H1 (cell line): ENCODE measurements at regions of chr6 and their contacts with region 1.

Region 1: GRCh38 chr6:93036835-93037234 is 382.5 kb downstream of the EPHA7 start:
- DNase-seq: no peak
- H3K4me3 ChIP-seq: no peak overlapping the region
- H3K27ac ChIP-seq: no peak overlapping the region
- H3K4me1 ChIP-seq: no peaks in the 10 kb centered on the region; a peak in 1 of 7 replicates
- H3K27me3 ChIP-seq: no peaks in the 10 kb centered on the region
- CTCF ChIP-seq: peak in 2 of 3 experiments; percentile 41 to 62; a peak in 2 of 4 replicates
- EP300 ChIP-seq: no peak
- POLR2A ChIP-seq: no peak
- RAD21 ChIP-seq: peak; percentile 84 to 87

Region 2: DNA sequence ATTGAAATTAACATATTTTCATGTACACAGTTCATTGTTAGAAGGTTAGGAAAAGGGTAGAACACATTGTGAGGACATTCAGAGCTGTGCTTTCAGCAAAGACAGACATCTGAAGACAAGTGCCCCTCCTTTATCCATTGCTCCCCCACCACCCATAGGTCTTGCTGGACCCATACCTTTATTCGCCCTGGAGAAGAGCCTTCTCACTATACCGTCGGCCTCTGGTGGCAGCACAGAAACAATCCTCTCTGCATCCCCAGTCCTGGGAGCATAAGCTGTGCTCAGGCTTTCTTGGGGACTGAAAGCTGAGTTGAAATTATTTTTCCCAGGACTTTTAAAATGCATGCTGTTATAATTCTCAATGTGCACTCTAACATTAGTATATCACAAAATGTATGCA is 10.2 kb after region 1 on chr6:
- CTCF ChIA-PET with region 1: interaction called, 16 read pairs
- POLR2A ChIA-PET with region 1: no interaction called
- DNase-seq: no peak
- H3K4me3 ChIP-seq: no peak overlapping the region
- H3K27ac ChIP-seq: no peak overlapping the region
- H3K4me1 ChIP-seq: peaks cover 0 to 10% (median 2%) of the 10 kb centered on the region in 4 experiments; a peak in 2 of 7 replicates
- H3K27me3 ChIP-seq: no peaks in the 10 kb centered on the region
- CTCF ChIP-seq: peak in 2 of 3 experiments; percentile 32 to 41; a peak in 2 of 4 replicates
- EP300 ChIP-seq: no peak
- POLR2A ChIP-seq: no peak
- RAD21 ChIP-seq: peak; percentile 28 to 47; a peak in 3 of 4 replicates

Region 3: GRCh38 chr6:93057584-93057983 is 20.7 kb after region 1 on chr6:
- CTCF ChIA-PET with region 1: no interaction called
- POLR2A ChIA-PET with region 1: no interaction called
- DNase-seq: no peak
- H3K4me3 ChIP-seq: no peak overlapping the region
- H3K27ac ChIP-seq: no peak overlapping the region
- H3K4me1 ChIP-seq: no peaks in the 10 kb centered on the region; a peak in 1 of 7 replicates
- H3K27me3 ChIP-seq: no peaks in the 10 kb centered on the region
- CTCF ChIP-seq: no peak
- EP300 ChIP-seq: no peak
- POLR2A ChIP-seq: no peak
- RAD21 ChIP-seq: no peak